ENCODE measurements at regions of chr12 and their contacts with region 1.

Region 1: DNA sequence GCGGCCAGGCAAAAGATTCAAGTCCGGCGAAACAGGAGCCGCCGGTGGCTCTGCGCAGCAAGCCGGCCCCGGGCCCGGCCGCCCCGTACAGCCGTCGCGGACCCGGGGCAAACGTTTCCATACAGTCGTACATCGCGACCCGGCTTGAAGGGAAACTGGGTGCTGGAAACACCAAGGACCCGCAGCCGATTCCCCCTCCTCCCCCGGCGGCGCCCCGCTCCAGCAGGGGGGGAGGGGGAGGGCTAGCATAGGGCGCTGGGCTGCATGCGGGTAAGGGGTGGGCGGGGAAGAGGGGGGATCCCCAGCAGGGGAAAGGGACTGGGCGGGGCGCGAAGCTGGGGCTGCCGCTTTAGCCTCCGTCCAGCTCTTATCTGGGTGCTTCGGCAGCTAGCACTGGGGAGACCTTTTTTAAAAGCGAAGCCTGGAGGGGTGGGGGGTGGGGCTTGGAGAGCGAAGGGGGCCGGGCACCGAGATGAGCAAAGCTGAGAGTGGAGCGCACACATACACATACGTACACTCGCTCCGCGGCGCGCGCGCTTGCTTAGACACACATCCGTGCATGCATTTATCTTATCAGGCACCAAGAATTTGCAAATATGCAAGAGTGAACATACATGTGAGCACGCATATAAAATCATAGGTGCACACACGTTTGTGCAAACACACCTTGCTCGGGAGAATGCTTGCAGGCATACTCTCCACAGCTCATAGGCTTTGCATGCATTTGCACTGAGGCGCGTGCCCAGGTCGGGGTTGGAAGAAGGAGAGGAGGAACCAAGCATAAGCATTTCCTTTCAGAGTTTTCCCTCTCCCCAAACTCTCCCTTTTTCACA is 11.8 kb downstream of the RARG start:
- DNase-seq: peak; percentile 64
- H3K4me3 ChIP-seq: peak overlapping the region; percentile 56 to 82 (median 72)
- H3K27ac ChIP-seq: peak overlapping the region; percentile 97 to 100 (median 99)
- H3K4me1 ChIP-seq: peaks cover 64 to 97% (median 68%) of the 10 kb centered on the region in 3 donors
- H3K27me3 ChIP-seq: no peaks in the 10 kb centered on the region
- CTCF ChIP-seq: no peak
- POLR2A ChIP-seq: no peak

Region 2: GRCh38 chr12:53251477-53252348 is 31.5 kb after region 1 on chr12:
- intact Hi-C with region 1: loop called (anchors 5 kb)
- DNase-seq: no peak
- H3K4me3 ChIP-seq: peak overlapping the region; percentile 62 to 95 (median 78)
- H3K27ac ChIP-seq: peak overlapping the region; percentile 91 to 97 (median 94)
- H3K4me1 ChIP-seq: peaks cover 23 to 52% (median 32%) of the 10 kb centered on the region in 3 donors
- H3K27me3 ChIP-seq: no peaks in the 10 kb centered on the region
- CTCF ChIP-seq: peak in 5 of 6 experiments; percentile 11 to 52 (median 29)
- POLR2A ChIP-seq: peak in 2 of 4 donors; percentile 5 to 50